Calu3 (cell line): ENCODE measurements at regions of chr3 and their contacts with region 1.

Region 1: DNA sequence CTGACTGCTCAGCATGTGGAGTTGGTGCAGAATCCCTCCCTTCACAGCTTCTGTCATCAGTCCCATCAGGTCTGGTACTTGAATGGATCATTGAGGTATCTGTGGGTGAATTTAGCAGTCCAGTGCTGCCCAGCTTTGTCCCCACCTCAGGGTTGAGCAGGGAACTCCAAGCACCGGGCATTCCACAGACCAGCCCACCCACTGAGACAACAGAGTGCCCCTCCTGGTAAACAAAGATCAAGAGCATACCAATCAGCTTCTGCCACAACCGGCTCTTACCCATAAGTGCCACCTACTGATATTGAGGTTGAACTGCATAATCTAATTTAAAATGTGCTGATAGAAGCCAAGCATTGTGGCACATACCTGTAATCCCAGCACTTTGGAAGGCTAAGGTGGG is 57.1 kb upstream of the FXR1 start:
- DNase-seq: peak; percentile 16
- H3K4me3 Mint-ChIP-seq: no peak overlapping the region
- H3K27ac Mint-ChIP-seq: no peak overlapping the region
- H3K4me1 Mint-ChIP-seq: no peaks in the 10 kb centered on the region
- H3K27me3 Mint-ChIP-seq: no peaks in the 10 kb centered on the region
- CTCF ChIP-seq: peak; percentile 45

Region 2: GRCh38 chr3:180690061-180690460 is 165.3 kb before region 1 on chr3:
- CTCF ChIA-PET with region 1: no interaction called
- intact Hi-C with region 1: loop called (anchors 1 kb)
- DNase-seq: no peak
- H3K4me3 Mint-ChIP-seq: no peak overlapping the region
- H3K27ac Mint-ChIP-seq: no peak overlapping the region
- H3K4me1 Mint-ChIP-seq: no peaks in the 10 kb centered on the region
- H3K27me3 Mint-ChIP-seq: peaks cover 33% of the 10 kb centered on the region
- CTCF ChIP-seq: no peak

Region 3: DNA sequence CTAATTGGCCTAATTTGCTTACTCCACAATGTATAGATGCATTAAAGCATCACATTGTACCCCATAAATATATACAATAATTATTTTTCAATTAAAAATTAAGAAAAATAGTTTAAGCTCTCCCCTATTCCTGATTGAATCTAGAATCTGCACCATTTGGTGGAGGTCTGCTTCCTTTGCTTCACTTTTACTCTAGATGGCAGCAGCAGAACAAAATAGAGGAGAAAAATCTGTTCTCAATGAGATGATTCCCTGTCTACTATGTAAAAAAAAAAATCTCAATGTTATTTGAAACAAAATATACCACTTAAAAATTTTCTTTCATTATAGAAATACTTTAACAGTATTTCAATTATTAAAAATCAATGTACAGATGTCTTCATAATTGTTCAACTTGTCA is 52.5 kb before region 1 on chr3:
- CTCF ChIA-PET with region 1: no interaction called
- intact Hi-C with region 1: loop called (anchors 5 kb)
- DNase-seq: peak; percentile 20
- H3K4me3 Mint-ChIP-seq: no peak overlapping the region
- H3K27ac Mint-ChIP-seq: no peak overlapping the region
- H3K4me1 Mint-ChIP-seq: no peaks in the 10 kb centered on the region
- H3K27me3 Mint-ChIP-seq: no peaks in the 10 kb centered on the region
- CTCF ChIP-seq: peak; percentile 59

Region 4: GRCh38 chr3:180881065-180881801 is 25.9 kb after region 1 on chr3:
- CTCF ChIA-PET with region 1: interaction called, 12 read pairs
- intact Hi-C with region 1: no loop called
- DNase-seq: no peak
- H3K4me3 Mint-ChIP-seq: no peak overlapping the region
- H3K27ac Mint-ChIP-seq: no peak overlapping the region
- H3K4me1 Mint-ChIP-seq: no peaks in the 10 kb centered on the region
- H3K27me3 Mint-ChIP-seq: no peaks in the 10 kb centered on the region
- CTCF ChIP-seq: no peak